ENCODE measurements at regions of chr16 and their contacts with region 1.

Region 1: DNA sequence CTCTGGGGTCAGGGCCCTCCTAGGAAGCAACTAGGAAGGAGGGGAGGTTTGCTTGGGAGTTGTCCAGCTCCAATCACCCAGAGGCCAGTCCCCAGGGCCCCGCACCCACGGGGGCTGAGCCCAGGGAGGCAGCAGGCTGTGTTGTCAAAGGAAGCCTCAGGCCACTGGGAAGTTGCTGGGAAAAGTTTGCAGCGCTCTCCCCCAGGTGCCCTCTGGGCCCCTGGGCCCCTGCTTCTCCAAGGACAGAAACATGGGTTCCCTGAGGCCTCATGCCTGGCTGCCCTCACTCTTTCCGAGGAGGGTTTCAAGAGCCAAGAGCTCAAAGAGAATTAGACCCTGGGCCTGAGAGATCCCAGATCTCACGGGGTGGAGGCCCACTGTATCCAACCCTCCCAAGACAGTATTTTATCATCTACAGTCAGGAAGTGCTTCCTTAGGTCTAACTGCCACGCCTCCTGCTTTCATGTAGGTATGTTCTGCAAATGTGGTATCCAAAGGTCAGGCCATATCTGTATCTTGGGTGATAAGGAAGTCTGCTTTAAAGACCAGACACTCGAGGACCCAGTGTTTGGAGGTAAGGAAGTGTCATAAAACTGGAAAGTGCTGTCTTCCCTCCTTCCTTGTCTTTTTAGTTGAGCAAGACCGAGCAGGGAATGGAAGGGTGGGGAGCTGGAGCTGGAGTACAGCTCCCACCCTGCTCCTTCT is 44.2 kb upstream of the ZNF423 start:
- DNase-seq: peak; percentile 80 to 91
- H3K4me3 ChIP-seq: no peak overlapping the region
- H3K4me3 Mint-ChIP-seq: peak overlapping the region; percentile 12
- H3K27ac Mint-ChIP-seq: peak overlapping the region; percentile 48
- H3K4me1 ChIP-seq: peaks cover 24% of the 10 kb centered on the region
- H3K4me1 Mint-ChIP-seq: peaks cover 28% of the 10 kb centered on the region
- H3K27me3 ChIP-seq: no peaks in the 10 kb centered on the region
- H3K27me3 Mint-ChIP-seq: no peaks in the 10 kb centered on the region
- CTCF ChIP-seq: no peak

Region 2: DNA sequence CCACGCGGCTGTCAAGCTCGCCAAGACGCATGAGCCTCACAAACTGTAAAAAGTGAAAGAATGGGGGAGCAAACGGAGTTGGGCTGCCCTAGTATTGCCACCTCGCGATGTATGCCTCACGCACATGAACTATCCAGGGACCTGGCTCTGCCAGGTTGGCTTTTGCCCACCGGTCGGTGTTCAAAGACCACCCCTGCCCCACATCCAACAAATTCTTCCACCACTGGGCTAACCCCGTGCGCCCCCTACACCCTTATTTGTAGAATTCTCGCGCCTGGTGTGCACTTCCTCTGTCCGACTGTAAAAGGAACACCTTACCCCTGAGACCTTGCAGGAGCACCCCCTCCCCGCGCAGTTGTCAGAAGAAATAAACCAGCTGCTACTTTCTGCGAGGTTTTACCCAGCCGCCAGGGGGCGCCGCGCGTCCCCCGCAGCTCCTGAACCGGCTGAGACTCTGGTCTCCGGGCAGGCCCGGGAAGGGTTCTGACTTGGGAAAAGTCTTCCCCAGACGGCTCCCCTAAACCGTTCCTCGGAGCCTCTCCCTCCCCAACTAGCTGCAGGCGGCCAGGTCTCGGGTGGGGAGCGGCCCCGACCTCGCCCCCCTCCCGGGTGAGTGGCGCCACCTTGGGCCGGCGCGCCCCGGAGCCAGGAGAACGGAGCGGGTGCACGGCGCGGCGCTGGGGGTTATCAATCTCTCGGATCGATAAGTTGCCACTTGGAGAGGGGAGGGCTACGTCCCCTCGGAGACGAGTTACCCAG is 42.5 kb before region 1 on chr16:
- CTCF ChIA-PET with region 1: interaction called, 15 read pairs
- POLR2A ChIA-PET with region 1: interaction called, 3 read pairs
- intact Hi-C with region 1: loop called (anchors 1 kb)
- DNase-seq: peak; percentile 75 to 83
- H3K4me3 ChIP-seq: peak overlapping the region; percentile 30
- H3K4me3 Mint-ChIP-seq: peak overlapping the region; percentile 86
- H3K27ac Mint-ChIP-seq: no peak overlapping the region
- H3K4me1 ChIP-seq: peaks cover 30% of the 10 kb centered on the region
- H3K4me1 Mint-ChIP-seq: peaks cover 14% of the 10 kb centered on the region
- H3K27me3 ChIP-seq: peaks cover 6% of the 10 kb centered on the region
- H3K27me3 Mint-ChIP-seq: peaks cover 25% of the 10 kb centered on the region
- CTCF ChIP-seq: peak; percentile 92 to 96

Region 3: DNA sequence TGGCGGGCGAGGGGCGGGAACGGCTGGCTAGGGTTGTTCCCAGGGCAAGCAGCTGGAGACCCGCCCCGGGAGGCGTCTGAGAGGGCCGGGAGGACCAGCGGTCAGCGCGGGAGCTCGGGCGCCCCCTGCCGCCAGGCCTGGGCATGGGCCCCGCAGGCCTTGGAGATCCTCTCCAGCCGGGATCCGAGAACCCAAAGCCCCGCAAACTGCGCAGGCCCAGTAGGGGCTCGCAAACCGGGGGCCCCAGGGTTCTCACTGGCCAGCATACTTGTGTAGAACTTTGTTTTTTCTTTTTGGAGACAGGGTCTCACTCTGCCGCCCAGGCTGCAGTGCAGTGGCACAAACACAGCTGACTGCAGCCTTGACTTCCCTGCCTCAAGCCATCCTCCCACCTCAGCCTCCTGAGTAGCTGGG is 23.4 kb before region 1 on chr16:
- CTCF ChIA-PET with region 1: interaction called, 6 read pairs
- POLR2A ChIA-PET with region 1: no interaction called
- intact Hi-C with region 1: loop called (anchors 2 kb)
- DNase-seq: peak; percentile 68 to 69
- H3K4me3 ChIP-seq: no peak overlapping the region
- H3K4me3 Mint-ChIP-seq: no peak overlapping the region
- H3K27ac Mint-ChIP-seq: no peak overlapping the region
- H3K4me1 ChIP-seq: peaks cover 14% of the 10 kb centered on the region
- H3K4me1 Mint-ChIP-seq: peaks cover 7% of the 10 kb centered on the region
- H3K27me3 ChIP-seq: no peaks in the 10 kb centered on the region
- H3K27me3 Mint-ChIP-seq: no peaks in the 10 kb centered on the region
- CTCF ChIP-seq: peak; percentile 51 to 75

Region 4: DNA sequence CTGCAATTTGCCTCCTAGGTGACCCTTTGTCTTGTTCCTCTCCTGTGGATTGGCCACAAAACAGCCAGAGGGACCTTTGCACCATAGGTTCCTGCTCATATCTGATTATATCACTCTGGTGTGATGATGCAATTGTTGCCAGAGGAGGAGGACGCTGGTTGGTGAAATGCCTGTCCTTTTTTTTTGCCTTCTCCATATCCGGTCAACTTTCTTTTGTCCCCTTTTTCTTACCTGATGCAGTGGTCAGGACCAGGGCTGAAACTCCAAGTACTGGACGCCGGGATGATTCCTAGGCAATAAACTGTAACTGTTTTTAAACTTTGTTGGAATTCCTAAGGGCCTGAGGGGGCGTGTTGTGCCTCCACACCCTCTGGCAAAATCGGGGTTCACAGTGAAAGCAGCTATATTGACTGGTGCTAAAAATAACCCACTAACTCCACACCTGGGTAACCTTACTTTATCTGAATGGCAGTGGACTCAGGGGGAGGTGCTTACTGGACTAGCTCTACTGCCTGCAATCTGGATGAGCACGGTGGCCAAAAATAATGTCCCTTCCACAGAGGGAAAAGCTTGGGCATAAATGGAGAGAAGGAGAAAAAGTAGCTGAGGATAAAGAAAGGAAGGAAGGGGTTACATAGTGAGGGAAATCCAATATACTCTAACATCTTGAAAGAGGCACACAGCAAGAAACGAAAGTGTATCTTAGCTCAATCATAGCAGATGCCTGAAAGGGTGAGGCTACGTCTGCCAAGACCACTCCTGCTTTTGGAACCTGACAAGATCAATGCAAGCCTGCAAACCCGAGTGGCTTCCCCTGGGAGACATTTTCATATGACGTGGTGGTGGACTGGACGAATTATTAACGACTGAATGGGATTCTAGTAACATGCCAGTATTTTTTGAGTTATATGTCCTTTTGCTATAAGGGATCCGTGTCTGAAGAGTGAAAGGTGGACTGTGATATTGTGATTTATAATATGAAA is 15.8 kb before region 1 on chr16:
- CTCF ChIA-PET with region 1: interaction called, 6 read pairs
- POLR2A ChIA-PET with region 1: interaction called, 3 read pairs
- intact Hi-C with region 1: loop called (anchors 1 kb)
- DNase-seq: peak; percentile 77 to 84
- H3K4me3 ChIP-seq: no peak overlapping the region
- H3K4me3 Mint-ChIP-seq: peak overlapping the region; percentile 41
- H3K27ac Mint-ChIP-seq: peak overlapping the region; percentile 29
- H3K4me1 ChIP-seq: peaks cover 30% of the 10 kb centered on the region
- H3K4me1 Mint-ChIP-seq: peaks cover 23% of the 10 kb centered on the region
- H3K27me3 ChIP-seq: no peaks in the 10 kb centered on the region
- H3K27me3 Mint-ChIP-seq: no peaks in the 10 kb centered on the region
- CTCF ChIP-seq: no peak